Calu3 (cell line): ENCODE measurements at regions of chr15 and their contacts with region 1.

Region 1: GRCh38 chr15:39180483-39180933 is 400.4 kb upstream of the THBS1 start:
- DNase-seq: no peak
- H3K4me3 Mint-ChIP-seq: no peak overlapping the region
- H3K27ac Mint-ChIP-seq: peak overlapping the region; percentile 60
- H3K4me1 Mint-ChIP-seq: peaks cover 19% of the 10 kb centered on the region
- H3K27me3 Mint-ChIP-seq: no peaks in the 10 kb centered on the region
- CTCF ChIP-seq: no peak

Region 2: GRCh38 chr15:39438799-39439592 is 258.5 kb after region 1 on chr15:
- CTCF ChIA-PET with region 1: no interaction called
- intact Hi-C with region 1: loop called (anchors 5 kb)
- DNase-seq: no peak
- H3K4me3 Mint-ChIP-seq: no peak overlapping the region
- H3K27ac Mint-ChIP-seq: no peak overlapping the region
- H3K4me1 Mint-ChIP-seq: no peaks in the 10 kb centered on the region
- H3K27me3 Mint-ChIP-seq: no peaks in the 10 kb centered on the region
- CTCF ChIP-seq: no peak